Activated CD4-positive, alpha-beta memory T cell treated with anti-CD3 and anti-CD28 coated beads for 36 hours (primary cell): ENCODE measurements at regions of chr17 and their contacts with region 1.

Region 1: DNA sequence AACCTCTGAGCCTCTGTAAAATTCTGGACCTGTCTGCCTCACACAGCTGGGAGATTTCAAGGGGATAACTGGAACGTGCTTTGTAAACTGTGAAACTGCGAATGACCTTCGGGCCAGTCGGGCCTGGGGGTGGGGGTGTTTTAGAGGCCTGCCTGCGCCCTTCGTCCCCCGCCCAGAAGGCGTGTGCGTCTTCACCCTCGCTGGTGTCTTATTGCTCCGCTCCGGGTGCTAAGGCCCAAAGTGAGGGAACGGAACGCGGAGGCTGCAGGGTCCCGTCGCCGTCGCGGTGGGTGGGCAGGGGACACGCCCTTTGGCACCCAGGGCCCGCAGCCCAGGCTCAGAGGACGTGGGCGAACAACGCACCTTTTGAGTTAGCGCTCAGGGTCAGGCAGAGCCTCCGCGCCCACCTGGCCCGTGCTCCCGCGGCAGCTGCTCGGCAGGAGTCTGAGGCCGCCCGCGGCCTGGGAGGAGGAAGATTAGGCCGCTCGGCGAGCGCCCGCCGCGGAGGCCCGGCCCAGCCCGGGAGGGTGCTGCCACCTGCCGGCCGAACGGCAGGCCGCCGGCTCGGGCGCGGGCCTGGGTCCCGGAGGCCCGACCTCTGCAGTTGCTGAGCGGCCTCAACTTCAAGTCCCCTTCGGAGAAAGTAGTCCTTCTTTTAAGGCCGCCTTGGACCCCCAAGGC is 29.7 kb downstream of the DCAKD start:
- DNase-seq: peak; percentile 71
- H3K4me3 Mint-ChIP-seq: peak overlapping the region; percentile 12
- H3K27ac Mint-ChIP-seq: no peak overlapping the region
- H3K4me1 Mint-ChIP-seq: peaks cover 16% of the 10 kb centered on the region
- H3K27me3 Mint-ChIP-seq: peaks cover 35% of the 10 kb centered on the region

Region 2: DNA sequence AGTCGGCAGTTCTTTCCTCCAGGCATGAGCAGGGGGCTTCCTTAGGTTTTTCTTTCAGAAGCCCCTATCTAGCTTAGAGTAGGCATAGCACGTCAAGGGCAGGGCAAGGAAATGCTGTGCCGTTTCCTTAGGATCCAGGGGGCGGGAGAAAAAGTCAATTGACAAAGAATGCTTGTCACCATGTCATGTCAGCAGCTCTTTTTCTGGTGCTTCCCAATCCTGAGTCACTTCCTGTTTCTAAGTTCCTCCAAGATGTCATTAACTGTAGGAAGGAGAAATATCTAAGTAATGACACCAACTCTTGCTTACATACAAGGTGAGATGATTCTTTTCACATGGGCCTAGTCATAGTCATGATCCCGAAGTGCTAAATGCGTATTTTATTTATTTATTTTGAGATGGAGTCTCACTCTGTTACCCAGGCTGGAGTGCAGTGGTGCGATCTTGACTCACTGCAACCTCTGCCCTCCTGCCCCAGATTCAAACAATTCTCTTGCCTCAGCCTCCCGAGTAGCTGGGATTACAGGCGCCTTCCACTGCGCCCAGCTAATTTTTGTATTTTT is 226.8 kb before region 1 on chr17:
- CTCF ChIA-PET with region 1: no interaction called
- POLR2A ChIA-PET with region 1: no interaction called
- intact Hi-C with region 1: no loop called
- DNase-seq: no peak
- H3K4me3 Mint-ChIP-seq: no peak overlapping the region
- H3K27ac Mint-ChIP-seq: no peak overlapping the region
- H3K4me1 Mint-ChIP-seq: peaks cover 4% of the 10 kb centered on the region
- H3K27me3 Mint-ChIP-seq: peaks cover 2% of the 10 kb centered on the region

Region 3: GRCh38 chr17:44878627-44879221 is 143.0 kb before region 1 on chr17:
- CTCF ChIA-PET with region 1: interaction called, 17 read pairs
- POLR2A ChIA-PET with region 1: no interaction called
- intact Hi-C with region 1: no loop called
- DNase-seq: peak; percentile 24
- H3K4me3 Mint-ChIP-seq: no peak overlapping the region
- H3K27ac Mint-ChIP-seq: no peak overlapping the region
- H3K4me1 Mint-ChIP-seq: no peaks in the 10 kb centered on the region
- H3K27me3 Mint-ChIP-seq: no peaks in the 10 kb centered on the region

Region 4: DNA sequence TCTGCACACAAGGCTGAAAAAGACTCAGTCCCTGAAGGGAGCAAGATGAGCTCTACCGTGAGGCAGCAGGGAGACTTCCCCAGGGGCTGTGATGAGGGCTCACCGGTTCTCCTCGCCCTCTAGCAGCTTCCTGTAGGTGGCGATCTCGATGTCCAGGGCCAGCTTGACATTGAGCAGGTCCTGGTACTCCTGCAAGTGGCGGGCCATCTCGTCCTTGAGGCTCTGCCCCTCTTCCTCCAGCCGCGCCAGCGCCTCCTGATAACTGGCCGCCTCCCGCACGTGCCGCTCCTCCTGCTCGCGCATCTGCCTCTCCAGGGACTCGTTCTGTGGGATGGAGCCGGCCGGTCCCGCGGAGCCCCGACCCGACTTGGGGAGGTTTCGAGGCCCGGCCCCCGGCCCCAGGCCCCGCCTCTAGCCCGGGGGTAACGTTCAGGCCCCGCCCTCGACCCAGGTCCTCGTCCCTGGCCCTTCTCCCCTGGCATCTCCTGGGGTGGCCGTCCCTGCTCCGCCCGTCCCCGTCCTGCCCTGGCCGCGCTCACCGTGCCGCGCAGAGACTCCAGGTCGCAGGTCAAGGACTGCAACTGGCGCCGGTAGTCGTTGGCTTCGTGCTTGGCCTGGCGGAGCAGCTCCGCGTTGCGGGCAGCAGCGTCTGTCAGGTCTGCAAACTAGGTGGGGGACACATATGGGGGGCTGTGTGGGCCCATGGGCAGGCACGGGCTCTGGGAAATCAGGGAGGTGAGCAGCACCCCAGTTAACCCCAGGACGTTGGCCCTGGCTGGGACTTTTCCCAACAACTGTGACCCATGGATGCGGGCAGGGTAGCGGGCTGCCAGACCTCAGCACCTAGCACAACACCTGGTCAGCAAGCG is 110.4 kb before region 1 on chr17:
- CTCF ChIA-PET with region 1: interaction called, 57 read pairs
- POLR2A ChIA-PET with region 1: interaction called, 3 read pairs
- intact Hi-C with region 1: no loop called
- DNase-seq: peak; percentile 70
- H3K4me3 Mint-ChIP-seq: peak overlapping the region; percentile 16
- H3K27ac Mint-ChIP-seq: no peak overlapping the region
- H3K4me1 Mint-ChIP-seq: peaks cover 6% of the 10 kb centered on the region
- H3K27me3 Mint-ChIP-seq: peaks cover 24% of the 10 kb centered on the region

Region 5: GRCh38 chr17:44947461-44948314 is 74.1 kb before region 1 on chr17 and contains the start of gene KIF18B:
- CTCF ChIA-PET with region 1: interaction called, 4 read pairs
- POLR2A ChIA-PET with region 1: no interaction called
- intact Hi-C with region 1: loop called (anchors 2 kb)
- DNase-seq: peak; percentile 96
- H3K4me3 Mint-ChIP-seq: peak within 1 kb of the TSS; percentile 91
- H3K27ac Mint-ChIP-seq: peak within 1 kb of the TSS; percentile 84
- H3K4me1 Mint-ChIP-seq: peaks cover 9% of the 10 kb centered on the region
- H3K27me3 Mint-ChIP-seq: peaks cover 6% of the 10 kb centered on the region
- total RNA-seq, gene KIF18B: 36.2 to 42.9 TPM

Region 6: DNA sequence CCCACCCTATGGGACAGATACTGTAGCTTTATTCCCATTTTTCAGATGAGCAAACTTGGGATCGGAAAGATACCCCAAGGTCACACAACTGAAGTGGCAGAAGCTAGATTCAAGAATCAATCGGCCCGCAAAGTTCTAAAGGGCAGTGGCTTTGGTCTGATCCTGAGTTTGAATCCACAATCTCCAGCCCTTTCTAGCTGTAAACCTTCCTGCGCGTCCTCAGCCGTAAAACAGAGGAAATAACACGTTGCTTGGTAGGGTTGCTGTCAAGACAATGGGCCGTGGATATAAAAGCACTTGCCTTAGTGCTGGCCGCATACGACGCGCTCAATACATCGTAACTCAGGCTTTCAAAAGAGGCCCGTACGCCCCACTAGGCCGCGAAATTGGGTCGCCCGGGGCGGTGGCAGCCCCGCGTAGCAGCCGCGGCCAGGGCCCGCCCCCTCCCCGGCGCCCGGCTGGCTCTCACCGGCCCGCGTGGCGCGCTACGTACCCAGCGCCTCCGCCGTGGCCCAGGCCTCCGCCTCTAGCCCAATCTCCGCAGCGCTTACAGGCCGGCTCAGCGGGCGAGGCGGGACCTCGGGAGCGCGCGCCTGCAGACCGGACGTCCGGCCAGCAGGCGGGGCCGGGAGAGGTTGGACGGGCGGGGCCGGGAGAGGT is 29.4 kb after region 1 on chr17 and contains the start of gene DCAKD:
- CTCF ChIA-PET with region 1: interaction called, 16 read pairs
- POLR2A ChIA-PET with region 1: interaction called, 3 read pairs
- intact Hi-C with region 1: no loop called
- DNase-seq: peak; percentile 95
- H3K4me3 Mint-ChIP-seq: peak within 1 kb of the TSS; percentile 93
- H3K27ac Mint-ChIP-seq: peak within 1 kb of the TSS; percentile 94
- H3K4me1 Mint-ChIP-seq: peaks cover 45% of the 10 kb centered on the region
- H3K27me3 Mint-ChIP-seq: no peaks in the 10 kb centered on the region
- total RNA-seq, gene DCAKD: 32.0 to 34.0 TPM

Region 7: GRCh38 chr17:45073414-45074070 is 51.8 kb after region 1 on chr17:
- CTCF ChIA-PET with region 1: no interaction called
- POLR2A ChIA-PET with region 1: no interaction called
- intact Hi-C with region 1: no loop called
- DNase-seq: no peak
- H3K4me3 Mint-ChIP-seq: no peak overlapping the region
- H3K27ac Mint-ChIP-seq: peak overlapping the region; percentile 60
- H3K4me1 Mint-ChIP-seq: peaks cover 29% of the 10 kb centered on the region
- H3K27me3 Mint-ChIP-seq: no peaks in the 10 kb centered on the region